ENCODE measurements at regions of chr14 and their contacts with region 1.

Region 1: DNA sequence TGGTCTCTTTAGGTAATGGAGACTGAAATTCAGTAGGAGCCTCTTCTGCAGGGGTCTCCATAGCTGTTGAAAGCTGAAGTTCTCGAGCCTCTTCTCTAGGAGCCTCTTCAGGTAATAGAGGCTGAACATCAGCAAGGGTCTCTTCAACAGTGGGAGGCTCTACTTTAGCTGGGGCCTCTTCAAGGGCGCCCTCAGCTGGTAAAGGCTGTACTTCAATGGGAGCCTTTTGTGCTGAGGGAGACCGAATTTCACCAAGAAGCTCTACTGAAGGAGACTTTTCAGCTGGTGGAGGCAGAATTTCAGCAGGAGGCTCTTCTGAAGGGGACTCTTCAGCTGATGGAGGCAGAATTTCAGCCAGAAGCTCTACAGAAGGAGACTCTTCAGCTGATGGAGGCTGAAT is 1.5 kb downstream of the FSCB start:
- DNase-seq: no peak
- ATAC-seq: no peak
- H3K4me3 ChIP-seq: no peak overlapping the region
- H3K27ac ChIP-seq: no peak overlapping the region
- H3K4me1 ChIP-seq: no peaks in the 10 kb centered on the region
- H3K27me3 ChIP-seq: no peaks in the 10 kb centered on the region
- CTCF ChIP-seq: peak in 2 of 3 experiments; percentile 9 to 17; a peak in 1 of 6 replicates
- POLR2A ChIP-seq: no peak
- RAD21 ChIP-seq: peak; percentile 24; the same call in 1 of the 2 replicates

Region 2: DNA sequence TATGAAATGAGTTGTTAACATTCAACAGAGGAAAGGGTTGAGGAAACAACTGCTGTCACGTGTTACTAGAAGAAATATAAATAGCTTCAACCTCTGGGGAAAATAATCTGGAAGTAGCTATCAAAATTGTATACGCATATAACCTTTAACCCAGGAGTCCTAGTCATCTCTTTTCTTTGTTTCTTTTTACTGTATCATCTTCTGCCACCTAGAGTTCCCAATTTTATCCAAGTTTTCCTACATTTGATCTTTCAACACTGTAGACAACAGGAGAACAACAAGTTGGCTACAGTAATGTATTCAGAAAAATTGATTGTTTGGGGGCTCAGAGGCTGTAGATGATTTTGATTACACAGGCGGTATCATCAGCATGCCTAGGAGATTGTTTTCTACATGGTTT is 452.2 kb before region 1 on chr14:
- CTCF ChIA-PET with region 1: no interaction called
- POLR2A ChIA-PET with region 1: no interaction called
- RAD21 ChIA-PET with region 1: no interaction called
- intact Hi-C with region 1: loop called (anchors 5 kb)
- DNase-seq: no peak
- ATAC-seq: no peak
- H3K4me3 ChIP-seq: no peak overlapping the region
- H3K27ac ChIP-seq: no peak overlapping the region
- H3K4me1 ChIP-seq: no peaks in the 10 kb centered on the region
- H3K27me3 ChIP-seq: no peaks in the 10 kb centered on the region
- CTCF ChIP-seq: no peak
- POLR2A ChIP-seq: no peak
- RAD21 ChIP-seq: no peak

Region 3: GRCh38 chr14:44873536-44873935 is 367.9 kb after region 1 on chr14:
- CTCF ChIA-PET with region 1: no interaction called
- POLR2A ChIA-PET with region 1: no interaction called
- RAD21 ChIA-PET with region 1: no interaction called
- intact Hi-C with region 1: no loop called
- DNase-seq: no peak
- ATAC-seq: no peak
- H3K4me3 ChIP-seq: no peak overlapping the region
- H3K27ac ChIP-seq: no peak overlapping the region
- H3K4me1 ChIP-seq: no peaks in the 10 kb centered on the region
- H3K27me3 ChIP-seq: no peaks in the 10 kb centered on the region
- CTCF ChIP-seq: no peak
- POLR2A ChIP-seq: no peak
- RAD21 ChIP-seq: no peak